BJ (cell line): ENCODE measurements at regions of chr5 and their contacts with region 1.

Region 1: GRCh38 chr5:96743065-96743768 is 64.5 kb downstream of the ERAP1 start:
- DNase-seq: no peak
- H3K4me3 ChIP-seq: no peak overlapping the region
- H3K27me3 ChIP-seq: no peaks in the 10 kb centered on the region
- CTCF ChIP-seq: no peak

Region 2: GRCh38 chr5:97162045-97162444 is 418.8 kb after region 1 on chr5:
- CTCF ChIA-PET with region 1: interaction called, 18 read pairs
- POLR2A ChIA-PET with region 1: no interaction called
- DNase-seq: peak; percentile 25
- H3K4me3 ChIP-seq: no peak overlapping the region
- H3K27me3 ChIP-seq: no peaks in the 10 kb centered on the region
- CTCF ChIP-seq: peak; percentile 85